Activated naive CD4-positive, alpha-beta T cell treated with anti-CD3 and anti-CD28 coated beads for 36 hours (primary cell): ENCODE measurements at regions of chr16 and their contacts with region 1.

Region 1: DNA sequence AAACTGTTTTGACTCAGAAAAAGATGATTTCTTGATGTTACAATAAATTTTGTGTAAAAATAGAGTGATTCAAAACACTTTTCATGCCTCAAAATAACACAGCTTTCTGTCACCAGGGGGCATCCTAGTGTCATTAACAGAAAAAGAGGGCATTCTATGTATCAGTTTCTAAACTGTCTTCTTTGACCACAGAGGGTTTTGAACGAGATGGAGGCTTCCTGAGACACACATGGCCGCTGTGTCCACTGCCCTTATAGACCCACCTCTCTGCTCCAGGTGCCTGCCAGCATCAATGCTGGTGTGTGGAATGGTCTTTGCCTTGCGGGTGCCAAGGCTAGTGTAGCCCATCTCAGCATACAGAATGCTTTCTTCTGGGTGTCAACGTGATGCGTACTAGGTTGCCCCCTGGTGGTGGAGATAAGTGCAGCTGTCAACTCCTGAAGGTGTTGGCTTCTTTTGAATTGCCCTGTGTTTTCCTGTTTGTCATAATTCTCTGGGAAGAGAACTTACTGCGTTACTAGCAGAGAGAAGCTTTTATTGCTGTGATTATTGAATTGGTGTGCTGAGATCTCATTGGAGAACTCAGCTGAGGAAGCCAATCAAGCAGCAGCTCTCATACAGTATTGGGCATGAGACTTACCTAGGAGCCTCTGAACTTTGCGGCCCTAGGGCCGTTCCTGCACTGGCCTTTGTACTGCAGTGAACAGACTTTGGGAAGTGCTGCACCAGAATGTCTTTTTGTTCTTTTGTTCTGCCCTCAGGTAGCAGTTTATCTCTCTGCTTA is 38.6 kb downstream of the USP10 start:
- DNase-seq: peak; percentile 85
- H3K4me3 Mint-ChIP-seq: no peak overlapping the region
- H3K27ac Mint-ChIP-seq: no peak overlapping the region
- H3K4me1 Mint-ChIP-seq: peaks cover 53% of the 10 kb centered on the region
- H3K27me3 Mint-ChIP-seq: no peaks in the 10 kb centered on the region

Region 2: DNA sequence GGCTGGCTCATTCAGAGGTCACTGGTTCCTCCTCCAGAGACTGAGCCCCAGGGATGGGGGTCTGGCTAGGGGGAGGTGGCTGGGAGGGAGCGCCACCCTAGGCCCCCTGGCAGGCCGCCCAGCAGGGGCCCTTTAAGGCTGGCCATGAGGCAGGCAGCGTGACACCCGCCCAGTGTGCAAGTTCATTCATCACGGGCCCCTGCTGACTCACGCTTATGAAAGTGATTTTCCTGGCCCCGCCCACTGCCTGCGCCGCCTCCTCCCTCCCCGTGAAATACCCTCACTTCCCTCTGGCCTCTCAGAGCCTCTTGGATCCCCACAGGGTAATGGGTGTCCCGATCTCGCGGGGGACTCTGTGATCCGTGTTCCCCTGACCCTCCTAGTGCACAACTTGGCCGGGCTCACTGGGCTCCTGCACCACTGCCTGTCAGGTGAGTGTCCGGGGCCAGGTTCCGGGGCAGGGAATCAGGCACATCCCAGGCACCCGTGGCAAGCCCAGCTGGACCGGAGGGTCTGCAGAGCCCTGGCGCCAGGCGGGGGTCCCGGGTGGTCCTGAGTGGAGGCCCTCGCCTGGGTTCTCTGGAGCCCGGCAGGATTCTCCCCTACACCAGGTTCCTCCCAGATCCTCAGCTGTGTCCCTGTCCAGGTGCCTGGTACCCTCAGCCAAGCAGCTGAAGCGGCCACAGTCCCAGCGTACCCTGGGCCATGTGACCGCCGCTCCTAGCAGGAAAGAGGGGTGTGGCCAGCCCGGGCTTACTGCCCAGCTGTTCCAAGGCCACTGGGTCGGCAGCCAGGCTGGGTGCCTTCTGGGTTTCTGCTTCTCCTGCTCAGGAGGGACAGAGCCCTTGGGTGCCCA is 785.3 kb before region 1 on chr16 and contains the start of gene OSGIN1:
- CTCF ChIA-PET with region 1: no interaction called
- intact Hi-C with region 1: loop called (anchors 10 kb)
- DNase-seq: peak; percentile 95
- H3K4me3 Mint-ChIP-seq: peak within 1 kb of the TSS; percentile 62
- H3K27ac Mint-ChIP-seq: no peak within 1 kb of the TSS
- H3K4me1 Mint-ChIP-seq: peaks cover 16% of the 10 kb centered on the region
- H3K27me3 Mint-ChIP-seq: peaks cover 28% of the 10 kb centered on the region
- total RNA-seq, gene OSGIN1: 0.47 to 0.86 TPM

Region 3: DNA sequence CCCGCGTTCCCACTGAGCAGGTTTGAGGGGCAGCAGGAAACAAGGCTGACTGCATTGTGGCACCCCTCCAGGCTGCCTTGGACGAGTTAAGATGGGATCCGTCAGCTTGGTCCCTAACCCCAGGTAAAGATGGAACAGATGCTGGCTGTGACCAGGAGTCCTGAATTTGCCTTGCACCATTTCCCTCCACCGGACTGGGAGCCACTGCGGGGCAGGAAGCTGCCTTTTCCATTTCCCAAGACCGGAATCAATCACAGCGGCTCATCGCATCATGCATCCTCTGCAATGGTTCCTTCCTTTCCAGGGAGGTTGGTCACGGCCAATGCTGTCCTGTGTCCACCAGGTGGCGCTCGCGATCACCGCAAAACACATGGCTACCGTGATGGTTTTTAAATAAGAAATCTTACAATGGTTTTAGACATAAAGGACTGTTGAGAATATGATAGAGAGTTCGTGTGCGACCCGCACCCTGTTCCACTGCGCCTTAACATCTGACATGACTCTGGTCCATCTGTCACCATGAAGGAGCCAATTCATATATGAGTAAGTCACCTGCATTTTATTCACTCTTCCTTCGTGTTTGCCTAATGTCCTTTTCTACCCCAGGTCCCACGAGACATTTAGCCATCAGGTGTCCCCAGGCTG is 227.1 kb before region 1 on chr16:
- CTCF ChIA-PET with region 1: interaction called, 5 read pairs
- intact Hi-C with region 1: loop called (anchors 1 kb)
- DNase-seq: peak; percentile 86
- H3K4me3 Mint-ChIP-seq: no peak overlapping the region
- H3K27ac Mint-ChIP-seq: no peak overlapping the region
- H3K4me1 Mint-ChIP-seq: peaks cover 64% of the 10 kb centered on the region
- H3K27me3 Mint-ChIP-seq: no peaks in the 10 kb centered on the region

Region 4: DNA sequence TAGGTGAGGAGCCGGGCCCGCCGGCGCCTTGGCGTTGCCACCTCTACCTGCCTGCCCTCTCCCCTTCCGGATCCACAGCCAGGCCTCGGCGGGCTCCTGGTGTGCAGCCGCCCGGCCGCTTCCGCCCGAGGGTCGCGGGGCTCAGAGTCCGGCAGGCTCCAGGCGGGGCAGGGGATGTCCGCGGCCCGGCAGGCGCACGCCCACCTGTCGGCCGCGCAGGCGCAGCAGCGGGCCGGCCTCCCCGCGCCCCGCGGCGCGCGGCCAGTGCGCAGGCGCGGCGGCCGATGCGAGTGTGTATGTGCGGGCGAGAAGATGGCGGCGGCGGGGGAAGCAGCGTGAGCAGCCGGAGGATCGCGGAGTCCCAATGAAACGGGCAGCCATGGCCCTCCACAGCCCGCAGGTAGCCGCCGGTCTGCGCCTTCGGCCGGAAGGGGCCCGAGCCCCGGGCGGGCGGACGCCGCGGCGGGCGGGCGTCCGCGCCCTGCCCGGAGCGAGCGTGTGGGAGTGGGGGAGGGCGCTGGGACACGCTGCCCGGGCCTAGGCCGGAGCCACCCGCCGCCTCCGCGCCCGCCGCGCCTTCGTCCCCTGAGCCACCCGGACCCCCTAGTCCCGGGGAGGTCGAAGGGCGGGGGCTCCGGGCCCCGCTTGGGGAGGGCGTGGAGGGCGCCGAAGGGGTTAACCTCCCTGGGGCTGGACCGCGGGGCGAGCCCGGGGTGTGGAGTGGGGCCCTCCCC is 38.6 kb before region 1 on chr16 and contains the start of gene USP10:
- CTCF ChIA-PET with region 1: interaction called, 11 read pairs
- intact Hi-C with region 1: no loop called
- DNase-seq: peak; percentile 80
- H3K4me3 Mint-ChIP-seq: peak within 1 kb of the TSS; percentile 95
- H3K27ac Mint-ChIP-seq: peak within 1 kb of the TSS; percentile 95
- H3K4me1 Mint-ChIP-seq: peaks cover 31% of the 10 kb centered on the region
- H3K27me3 Mint-ChIP-seq: no peaks in the 10 kb centered on the region
- total RNA-seq, gene USP10: 93.9 to 95.2 TPM

Region 5: GRCh38 chr16:84720177-84720579 is 18.3 kb before region 1 on chr16:
- CTCF ChIA-PET with region 1: interaction called, 124 read pairs
- intact Hi-C with region 1: no loop called
- DNase-seq: no peak
- H3K4me3 Mint-ChIP-seq: no peak overlapping the region
- H3K27ac Mint-ChIP-seq: no peak overlapping the region
- H3K4me1 Mint-ChIP-seq: peaks cover 76% of the 10 kb centered on the region
- H3K27me3 Mint-ChIP-seq: no peaks in the 10 kb centered on the region

Region 6: DNA sequence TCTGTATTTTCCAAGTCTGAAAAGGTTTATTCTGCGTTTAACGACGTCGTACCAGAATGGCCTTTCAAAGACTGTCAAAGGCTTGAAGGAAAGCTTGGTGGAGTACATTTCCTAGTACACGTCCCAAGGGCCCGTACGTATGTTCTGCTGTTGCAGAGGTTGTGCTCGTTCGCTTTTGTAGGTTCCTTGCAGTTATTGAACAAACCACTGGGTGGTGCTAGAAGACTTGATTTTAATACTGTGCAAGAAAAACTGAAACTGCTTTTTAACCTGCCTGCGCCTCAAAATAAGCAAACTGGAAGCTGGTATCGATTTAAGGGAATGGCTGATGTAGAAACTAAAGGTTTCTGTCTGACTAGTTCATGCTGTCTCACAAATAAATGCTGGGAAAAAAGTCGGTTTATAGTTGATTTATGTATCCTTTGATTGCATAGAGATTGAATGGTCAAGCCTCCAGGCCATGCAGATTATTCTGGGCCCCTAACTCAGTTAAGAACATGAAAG is 16.0 kb after region 1 on chr16:
- CTCF ChIA-PET with region 1: interaction called, 76 read pairs
- intact Hi-C with region 1: no loop called
- DNase-seq: peak; percentile 87
- H3K4me3 Mint-ChIP-seq: no peak overlapping the region
- H3K27ac Mint-ChIP-seq: no peak overlapping the region
- H3K4me1 Mint-ChIP-seq: peaks cover 86% of the 10 kb centered on the region
- H3K27me3 Mint-ChIP-seq: no peaks in the 10 kb centered on the region

Region 7: GRCh38 chr16:84970447-84971127 is 232.1 kb after region 1 on chr16:
- CTCF ChIA-PET with region 1: interaction called, 13 read pairs
- intact Hi-C with region 1: loop called (anchors 1 kb)
- DNase-seq: peak; percentile 86
- H3K4me3 Mint-ChIP-seq: no peak overlapping the region
- H3K27ac Mint-ChIP-seq: no peak overlapping the region
- H3K4me1 Mint-ChIP-seq: peaks cover 5% of the 10 kb centered on the region
- H3K27me3 Mint-ChIP-seq: no peaks in the 10 kb centered on the region